H1 (cell line): ENCODE measurements at regions of chr15 and their contacts with region 1.

Region 1: GRCh38 chr15:83446904-83447709 is at the start of gene SH3GL3:
- DNase-seq: peak; percentile 64 to 85
- H3K4me3 ChIP-seq: peak within 1 kb of the TSS; percentile 48 to 80 (median 70)
- H3K27ac ChIP-seq: 0 out of 2 replicates have a peak within 1 kb of the TSS, but pooled peaks have one; percentile 4
- H3K4me1 ChIP-seq: peaks cover 0 to 9% (median 4%) of the 10 kb centered on the region in 4 experiments; a peak in 4 of 7 replicates
- H3K27me3 ChIP-seq: peaks cover 0 to 11% (median 7%) of the 10 kb centered on the region in 4 experiments; a peak in 5 of 7 replicates
- CTCF ChIP-seq: peak; percentile 60 to 68 (median 66)
- EP300 ChIP-seq: no peak
- POLR2A ChIP-seq: peak in 1 of 2 experiments; percentile 58; a peak in 1 of 3 replicates
- RAD21 ChIP-seq: peak; percentile 78 to 85
- total RNA-seq, gene SH3GL3: 16.3 and 19.1 TPM in 2 replicates

Region 2: DNA sequence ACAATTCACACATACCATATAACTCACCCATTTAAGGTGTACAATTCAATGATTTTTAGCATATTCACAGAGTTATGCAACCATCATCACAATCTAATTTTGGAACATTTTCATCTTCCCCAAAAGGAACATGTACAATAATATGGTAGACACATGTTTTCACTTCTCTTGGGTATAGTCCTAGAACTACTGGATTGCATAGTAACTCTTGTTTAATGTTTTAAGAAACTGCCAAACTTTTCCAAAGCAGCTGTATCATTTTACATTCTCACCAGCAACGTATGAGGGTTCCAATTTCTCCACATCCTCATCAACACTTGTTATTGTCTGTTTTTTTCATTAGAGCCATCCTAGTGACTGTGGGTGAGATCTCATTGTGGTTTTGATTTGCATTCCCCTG is 176.9 kb before region 1 on chr15:
- CTCF ChIA-PET with region 1: no interaction called
- POLR2A ChIA-PET with region 1: no interaction called
- DNase-seq: no peak
- H3K4me3 ChIP-seq: no peak overlapping the region
- H3K27ac ChIP-seq: no peak overlapping the region
- H3K4me1 ChIP-seq: no peaks in the 10 kb centered on the region
- H3K27me3 ChIP-seq: no peaks in the 10 kb centered on the region
- CTCF ChIP-seq: no peak
- EP300 ChIP-seq: no peak
- POLR2A ChIP-seq: no peak
- RAD21 ChIP-seq: no peak

Region 3: GRCh38 chr15:83372420-83372891 is 74.7 kb before region 1 on chr15:
- CTCF ChIA-PET with region 1: no interaction called
- POLR2A ChIA-PET with region 1: no interaction called
- DNase-seq: no peak
- H3K4me3 ChIP-seq: no peak overlapping the region
- H3K27ac ChIP-seq: no peak overlapping the region
- H3K4me1 ChIP-seq: peaks cover 0 to 6% (median 2%) of the 10 kb centered on the region in 4 experiments; a peak in 4 of 7 replicates
- H3K27me3 ChIP-seq: peaks cover 0 to 5% (median 0%) of the 10 kb centered on the region in 4 experiments; a peak in 4 of 7 replicates
- CTCF ChIP-seq: no peak
- EP300 ChIP-seq: no peak
- POLR2A ChIP-seq: no peak
- RAD21 ChIP-seq: no peak

Region 4: GRCh38 chr15:83477808-83478537 is 30.9 kb after region 1 on chr15:
- CTCF ChIA-PET with region 1: interaction called, 10 read pairs
- POLR2A ChIA-PET with region 1: no interaction called
- DNase-seq: no peak
- H3K4me3 ChIP-seq: no peak overlapping the region
- H3K27ac ChIP-seq: no peak overlapping the region
- H3K4me1 ChIP-seq: peaks cover 2 to 13% (median 6%) of the 10 kb centered on the region in 4 experiments; a peak in 5 of 7 replicates
- H3K27me3 ChIP-seq: no peaks in the 10 kb centered on the region
- CTCF ChIP-seq: no peak
- EP300 ChIP-seq: no peak
- POLR2A ChIP-seq: no peak
- RAD21 ChIP-seq: no peak

Region 5: GRCh38 chr15:83549623-83550022 is 102.5 kb after region 1 on chr15:
- CTCF ChIA-PET with region 1: interaction called, 19 read pairs
- POLR2A ChIA-PET with region 1: interaction called, 9 read pairs
- DNase-seq: no peak
- H3K4me3 ChIP-seq: no peak overlapping the region
- H3K27ac ChIP-seq: no peak overlapping the region
- H3K4me1 ChIP-seq: peaks cover 2 to 20% (median 9%) of the 10 kb centered on the region in 4 experiments; a peak in 6 of 7 replicates
- H3K27me3 ChIP-seq: no peaks in the 10 kb centered on the region
- CTCF ChIP-seq: no peak
- EP300 ChIP-seq: no peak
- POLR2A ChIP-seq: no peak
- RAD21 ChIP-seq: no peak

Region 6: GRCh38 chr15:83559310-83559966 is 112.3 kb after region 1 on chr15:
- CTCF ChIA-PET with region 1: interaction called, 168 read pairs
- POLR2A ChIA-PET with region 1: interaction called, 4 read pairs
- DNase-seq: peak; percentile 46 to 74
- H3K4me3 ChIP-seq: no peak overlapping the region
- H3K27ac ChIP-seq: no peak overlapping the region
- H3K4me1 ChIP-seq: no peaks in the 10 kb centered on the region
- H3K27me3 ChIP-seq: no peaks in the 10 kb centered on the region
- CTCF ChIP-seq: peak; percentile 54 to 94 (median 91)
- EP300 ChIP-seq: no peak; a peak in 1 of 3 replicates
- POLR2A ChIP-seq: no peak
- RAD21 ChIP-seq: peak; percentile 96 to 100

Region 7: DNA sequence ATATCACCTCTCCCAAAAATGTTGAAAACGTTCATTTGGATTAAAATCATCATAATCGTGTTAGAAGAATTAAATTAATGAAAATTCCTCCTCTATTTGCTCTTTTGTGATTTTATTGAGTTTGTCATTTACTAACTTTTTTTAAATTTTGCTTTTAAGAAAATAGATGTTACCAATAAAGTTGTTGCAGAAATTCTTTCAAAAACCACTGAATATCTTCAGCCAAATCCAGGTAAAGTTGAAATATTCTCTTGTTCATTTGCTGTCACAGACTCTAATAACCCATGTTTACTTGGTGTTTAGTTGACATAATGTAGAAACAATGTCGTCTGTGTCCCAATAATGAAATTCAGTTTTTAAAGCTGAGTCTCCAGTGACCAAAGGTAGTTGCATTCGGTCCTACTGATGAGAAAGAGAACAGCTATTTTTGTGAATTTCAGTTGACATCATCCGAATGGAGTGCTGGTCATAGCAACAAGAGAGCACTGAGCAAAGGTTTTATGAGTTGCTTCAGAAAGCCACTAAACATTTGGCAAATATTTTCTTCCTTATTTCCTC is 117.9 kb after region 1 on chr15:
- CTCF ChIA-PET with region 1: interaction called, 168 read pairs
- POLR2A ChIA-PET with region 1: interaction called, 3 read pairs
- DNase-seq: no peak
- H3K4me3 ChIP-seq: no peak overlapping the region
- H3K27ac ChIP-seq: no peak overlapping the region
- H3K4me1 ChIP-seq: no peaks in the 10 kb centered on the region
- H3K27me3 ChIP-seq: no peaks in the 10 kb centered on the region
- CTCF ChIP-seq: no peak
- EP300 ChIP-seq: no peak
- POLR2A ChIP-seq: no peak
- RAD21 ChIP-seq: no peak

Region 8: DNA sequence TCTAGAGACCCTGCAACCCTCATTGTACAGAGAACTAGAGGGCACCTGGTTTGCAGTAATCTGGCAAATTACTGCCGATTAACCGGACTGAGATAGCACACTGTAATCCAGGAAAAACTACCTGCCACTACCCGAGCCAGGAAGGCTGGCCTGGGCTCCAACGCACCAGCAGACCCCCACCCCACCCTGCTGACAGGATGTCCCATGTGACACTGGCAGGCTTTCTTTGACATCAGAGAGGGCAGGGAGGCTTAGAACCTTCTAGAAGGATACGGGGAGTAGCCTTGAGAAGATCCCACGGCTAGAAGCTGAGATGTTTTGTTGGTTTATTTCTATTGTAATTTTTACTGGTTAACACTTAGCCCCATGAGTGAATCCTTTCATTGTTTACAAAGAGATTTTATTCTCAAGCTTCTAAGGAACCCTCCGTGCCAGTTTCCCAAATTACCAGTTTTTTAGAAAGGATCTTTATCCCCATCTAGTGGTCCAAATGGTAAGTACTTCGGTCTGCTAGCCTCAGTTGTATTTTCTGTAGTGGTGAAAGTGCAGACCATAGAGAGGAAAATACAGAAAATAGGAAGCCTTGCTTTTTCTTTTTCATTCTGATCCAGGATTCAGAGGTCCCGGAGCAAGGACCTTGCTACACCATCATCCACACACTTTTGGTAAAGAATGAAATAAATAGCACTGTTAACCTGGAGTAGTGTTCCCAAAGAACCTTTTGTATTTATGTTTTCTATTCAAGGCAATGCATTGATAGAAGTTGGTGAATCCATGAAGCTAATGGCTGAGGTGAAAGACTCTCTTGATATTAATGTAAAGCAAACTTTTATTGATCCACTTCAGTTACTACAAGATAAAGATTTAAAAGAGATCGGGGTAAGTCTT is 125.0 kb after region 1 on chr15:
- CTCF ChIA-PET with region 1: interaction called, 26 read pairs
- POLR2A ChIA-PET with region 1: no interaction called
- DNase-seq: peak in 1 of 2 experiments; percentile 53
- H3K4me3 ChIP-seq: no peak overlapping the region
- H3K27ac ChIP-seq: no peak overlapping the region
- H3K4me1 ChIP-seq: no peaks in the 10 kb centered on the region
- H3K27me3 ChIP-seq: no peaks in the 10 kb centered on the region
- CTCF ChIP-seq: peak in 2 of 3 experiments; percentile 55 to 56; a peak in 3 of 4 replicates
- EP300 ChIP-seq: no peak
- POLR2A ChIP-seq: no peak
- RAD21 ChIP-seq: peak; percentile 56 to 70